Upper lobe of right lung (tissue), 1 donor: ENCODE measurements at regions of chr11 and their contacts with region 1.

Region 1: GRCh38 chr11:119205574-119206510 is at the start of gene CBL:
- DNase-seq: peak; percentile 97
- ATAC-seq: peak; percentile 97
- H3K4me3 ChIP-seq: peak within 1 kb of the TSS; percentile 93
- H3K27ac ChIP-seq: peak within 1 kb of the TSS; percentile 85
- H3K4me1 ChIP-seq: peaks cover 13% of the 10 kb centered on the region
- H3K27me3 ChIP-seq: no peaks in the 10 kb centered on the region
- CTCF ChIP-seq: peak; percentile 91
- total RNA-seq, gene CBL: 30.0 TPM

Region 2: DNA sequence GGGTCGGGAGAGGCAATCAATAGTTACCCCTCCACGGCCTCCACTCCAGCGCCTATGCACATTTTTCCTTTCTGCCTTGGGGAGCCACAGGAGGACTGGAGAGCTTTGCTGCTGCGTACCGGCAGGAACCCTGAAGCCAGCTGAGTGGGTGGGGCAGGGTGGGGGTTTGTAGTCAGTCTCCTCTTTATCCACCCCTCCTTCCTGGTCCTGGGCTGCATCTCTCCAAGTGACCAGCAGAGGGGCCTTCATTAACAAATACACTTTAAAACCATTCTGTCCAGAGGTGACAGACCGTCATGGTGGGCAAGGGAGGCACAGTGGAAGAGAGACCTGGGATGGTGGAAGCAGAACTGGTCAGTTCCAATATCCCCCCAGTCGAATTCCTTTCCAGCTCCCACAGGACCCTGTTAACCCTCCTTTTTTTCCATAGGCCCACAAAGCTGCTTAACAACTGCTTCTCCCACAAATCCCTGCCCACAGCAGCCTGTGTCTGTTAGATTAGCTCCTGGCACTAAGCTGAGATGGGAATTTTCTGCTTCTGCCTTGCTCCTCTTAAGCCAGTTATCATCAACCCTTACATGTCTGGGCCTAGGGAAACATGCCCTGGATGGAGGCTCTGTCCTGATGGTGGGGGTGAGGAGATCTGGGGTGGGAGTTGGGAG is 60.9 kb before region 1 on chr11:
- intact Hi-C with region 1: no loop called
- DNase-seq: peak; percentile 55
- ATAC-seq: peak; percentile 90
- H3K4me3 ChIP-seq: no peak overlapping the region
- H3K27ac ChIP-seq: no peak overlapping the region
- H3K4me1 ChIP-seq: peaks cover 12% of the 10 kb centered on the region
- H3K27me3 ChIP-seq: peaks cover 20% of the 10 kb centered on the region
- CTCF ChIP-seq: peak; percentile 75

Region 3: DNA sequence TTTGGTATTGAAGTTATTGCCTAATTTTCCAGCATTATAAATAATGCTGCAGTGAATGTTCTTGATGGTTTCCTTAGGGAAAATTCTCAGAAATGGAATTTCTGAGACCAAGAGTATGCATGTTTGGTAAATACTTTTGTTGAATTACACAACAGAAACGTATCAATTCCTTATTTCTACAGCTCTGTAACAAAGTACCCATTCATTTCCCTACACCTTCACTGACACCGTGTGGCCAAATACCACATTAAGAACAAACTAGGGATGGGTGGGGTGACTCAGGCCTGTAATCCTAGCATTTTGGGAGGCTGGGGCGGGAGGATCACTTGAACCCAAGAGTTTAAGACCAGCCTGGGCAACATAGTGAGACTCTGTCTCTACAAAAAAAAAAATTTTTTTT is 89.3 kb after region 1 on chr11:
- intact Hi-C with region 1: no loop called
- DNase-seq: no peak
- ATAC-seq: no peak
- H3K4me3 ChIP-seq: no peak overlapping the region
- H3K27ac ChIP-seq: no peak overlapping the region
- H3K4me1 ChIP-seq: no peaks in the 10 kb centered on the region
- H3K27me3 ChIP-seq: no peaks in the 10 kb centered on the region
- CTCF ChIP-seq: no peak

Region 4: DNA sequence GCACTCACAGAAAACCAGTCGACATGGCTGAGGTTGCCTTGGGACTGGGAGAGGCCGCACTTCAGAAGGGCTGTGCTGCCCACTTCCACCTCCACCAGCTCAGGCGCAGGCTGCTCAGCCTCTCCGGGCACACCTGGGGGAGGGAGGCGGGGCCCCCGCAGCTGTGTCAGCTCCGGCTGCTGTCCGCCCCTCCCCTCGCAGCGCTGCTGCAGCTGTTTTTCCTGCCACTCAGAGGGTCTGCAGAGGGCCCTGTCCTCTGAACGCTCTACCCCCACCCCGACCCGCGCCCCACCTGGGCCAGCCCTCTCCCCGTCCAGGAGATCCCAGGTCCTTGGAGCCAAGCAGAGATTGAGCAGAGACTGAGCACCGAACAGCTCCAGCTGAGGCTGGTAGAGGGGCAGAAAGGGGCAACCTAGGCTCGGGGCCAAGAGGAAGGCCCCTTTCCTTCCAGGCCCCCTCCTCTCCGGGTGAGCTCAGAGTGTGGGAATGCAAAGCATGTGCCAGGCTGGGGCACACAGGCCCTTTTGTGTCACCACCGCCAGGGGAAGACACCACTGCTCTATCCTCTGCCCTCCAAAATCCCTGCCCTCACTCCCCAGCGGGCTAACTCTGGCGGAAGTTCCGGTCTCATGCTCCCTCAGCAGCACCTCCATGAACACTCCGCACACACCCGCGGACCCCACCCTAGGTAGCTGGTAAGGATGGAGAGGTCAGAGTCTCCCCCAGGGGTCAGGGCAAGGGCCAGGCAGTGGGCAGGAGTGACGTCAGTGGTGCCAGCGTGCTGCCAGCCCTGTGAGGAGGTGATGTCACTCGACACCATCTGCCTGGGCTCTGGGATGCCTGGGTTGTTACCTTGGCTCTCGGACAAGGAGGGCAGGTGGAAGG is 109.5 kb after region 1 on chr11:
- intact Hi-C with region 1: loop called (anchors 10 kb)
- DNase-seq: no peak
- ATAC-seq: peak; percentile 19
- H3K4me3 ChIP-seq: peak overlapping the region; percentile 57
- H3K27ac ChIP-seq: peak overlapping the region; percentile 78
- H3K4me1 ChIP-seq: peaks cover 21% of the 10 kb centered on the region
- H3K27me3 ChIP-seq: peaks cover 17% of the 10 kb centered on the region
- CTCF ChIP-seq: no peak